ENCODE measurements at regions of chr19 and their contacts with region 1.

Region 1: DNA sequence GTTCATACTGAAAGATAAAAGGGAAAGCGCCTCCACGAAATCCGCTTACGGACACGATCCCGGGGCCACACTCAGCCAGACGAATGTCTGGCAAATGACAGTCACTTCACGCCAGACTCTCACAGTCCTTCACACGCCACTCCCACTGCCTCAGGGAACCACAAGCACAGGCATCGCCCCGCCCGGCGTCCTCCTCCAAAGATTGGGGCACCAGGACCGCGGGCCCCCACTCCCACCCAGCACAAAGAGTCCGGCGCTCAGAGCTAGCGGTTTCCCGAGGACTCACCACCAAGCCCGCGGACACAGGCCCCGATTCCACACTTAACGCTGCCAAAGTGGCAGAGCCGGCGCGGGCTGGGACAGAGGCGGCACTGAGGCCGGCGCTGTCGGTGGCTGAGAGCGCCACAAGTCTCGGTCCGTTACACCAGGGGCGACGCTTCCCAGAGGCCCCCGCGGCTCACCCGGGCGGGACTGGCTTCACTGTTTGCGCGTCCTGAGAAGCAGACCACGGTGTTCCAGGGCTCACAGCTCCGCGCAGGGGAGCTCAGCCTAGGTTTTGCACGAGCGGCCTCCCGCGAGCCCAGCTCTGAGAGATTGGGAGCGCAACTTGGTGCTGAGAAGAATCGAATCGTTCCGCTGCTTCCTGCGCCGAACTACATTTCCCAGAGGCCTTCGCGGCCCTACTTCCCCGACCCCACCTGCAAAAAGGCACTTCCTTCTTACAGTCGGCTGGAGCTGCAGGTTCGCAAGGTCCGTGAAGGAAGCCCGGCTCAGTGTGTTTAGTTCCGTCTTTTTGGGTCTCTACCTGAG is at the start of gene ZNF569:
- DNase-seq: peak; percentile 75 to 81 (median 78)
- H3K4me3 ChIP-seq: peak within 1 kb of the TSS; percentile 45 to 98 (median 64)
- H3K4me3 Mint-ChIP-seq: peak within 1 kb of the TSS; percentile 96 to 98
- H3K27ac ChIP-seq: peak within 1 kb of the TSS; percentile 74 to 86
- H3K27ac Mint-ChIP-seq: peak within 1 kb of the TSS; percentile 67 to 95 (median 90)
- H3K4me1 ChIP-seq: peaks cover 26 to 33% of the 10 kb centered on the region in 2 donors
- H3K4me1 Mint-ChIP-seq: peaks cover 30% of the 10 kb centered on the region
- H3K27me3 ChIP-seq: no peaks in the 10 kb centered on the region
- H3K27me3 Mint-ChIP-seq: no peaks in the 10 kb centered on the region
- CTCF ChIP-seq: no peak
- polyA plus RNA-seq, gene ZNF569: 0.79 to 1.2 (median 0.83) TPM

Region 2: DNA sequence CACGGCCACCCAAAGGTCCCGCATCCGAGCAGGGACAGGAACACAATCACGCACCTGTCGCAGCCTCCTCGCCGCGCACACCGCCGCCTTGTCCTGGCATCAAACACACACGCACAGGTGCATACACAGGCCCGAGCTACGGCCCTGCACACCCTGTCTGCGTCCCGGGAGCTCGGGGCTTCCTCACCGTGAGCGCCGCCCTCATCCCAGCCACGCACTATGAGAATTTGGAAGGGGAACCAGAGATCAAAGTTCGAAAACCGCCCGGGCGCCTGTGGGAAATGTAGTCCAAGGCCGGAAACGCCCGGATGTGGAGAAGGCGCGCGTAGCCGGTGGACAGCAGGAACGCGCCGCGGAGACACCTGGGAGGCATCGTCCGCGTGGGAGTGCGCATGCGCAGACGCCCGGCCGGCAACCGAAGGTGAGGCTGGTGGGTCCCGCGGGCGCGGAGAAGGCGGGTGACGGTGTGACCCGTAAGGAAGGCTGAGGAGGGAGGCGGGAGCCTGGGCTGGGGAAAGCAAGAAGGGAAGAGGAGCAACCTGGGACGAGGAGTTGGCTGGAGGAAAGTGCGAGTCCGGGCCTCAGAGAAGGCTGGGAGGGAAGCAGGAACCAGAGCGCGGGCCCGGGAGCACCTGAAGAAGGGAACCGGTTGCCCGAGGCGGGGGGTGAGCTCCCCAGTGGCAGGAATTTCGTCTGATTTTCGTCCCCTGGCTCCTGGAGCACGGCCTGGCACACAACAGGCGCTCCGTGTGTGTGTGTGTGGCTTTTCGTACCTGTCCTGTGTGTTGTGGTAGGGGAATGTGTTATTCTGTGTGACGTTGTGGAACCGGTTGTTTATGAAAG is 779.6 kb before region 1 on chr19 and contains the start of gene ZNF567:
- intact Hi-C with region 1: loop called in 1 of 2 experiments (anchors 10 kb)
- DNase-seq: peak; percentile 88 to 90 (median 89)
- H3K4me3 ChIP-seq: peak within 1 kb of the TSS; percentile 35 to 92 (median 63)
- H3K4me3 Mint-ChIP-seq: peak within 1 kb of the TSS; percentile 96 to 99
- H3K27ac ChIP-seq: peak within 1 kb of the TSS; percentile 13 to 77
- H3K27ac Mint-ChIP-seq: peak within 1 kb of the TSS; percentile 66 to 90 (median 83)
- H3K4me1 ChIP-seq: peaks cover 15 to 23% of the 10 kb centered on the region in 2 donors
- H3K4me1 Mint-ChIP-seq: peaks cover 24% of the 10 kb centered on the region
- H3K27me3 ChIP-seq: no peaks in the 10 kb centered on the region
- H3K27me3 Mint-ChIP-seq: peaks cover 0 to 1% (median 0%) of the 10 kb centered on the region in 3 donors
- CTCF ChIP-seq: no peak
- polyA plus RNA-seq, gene ZNF567: 0.84 to 1.7 (median 1.5) TPM

Region 3: DNA sequence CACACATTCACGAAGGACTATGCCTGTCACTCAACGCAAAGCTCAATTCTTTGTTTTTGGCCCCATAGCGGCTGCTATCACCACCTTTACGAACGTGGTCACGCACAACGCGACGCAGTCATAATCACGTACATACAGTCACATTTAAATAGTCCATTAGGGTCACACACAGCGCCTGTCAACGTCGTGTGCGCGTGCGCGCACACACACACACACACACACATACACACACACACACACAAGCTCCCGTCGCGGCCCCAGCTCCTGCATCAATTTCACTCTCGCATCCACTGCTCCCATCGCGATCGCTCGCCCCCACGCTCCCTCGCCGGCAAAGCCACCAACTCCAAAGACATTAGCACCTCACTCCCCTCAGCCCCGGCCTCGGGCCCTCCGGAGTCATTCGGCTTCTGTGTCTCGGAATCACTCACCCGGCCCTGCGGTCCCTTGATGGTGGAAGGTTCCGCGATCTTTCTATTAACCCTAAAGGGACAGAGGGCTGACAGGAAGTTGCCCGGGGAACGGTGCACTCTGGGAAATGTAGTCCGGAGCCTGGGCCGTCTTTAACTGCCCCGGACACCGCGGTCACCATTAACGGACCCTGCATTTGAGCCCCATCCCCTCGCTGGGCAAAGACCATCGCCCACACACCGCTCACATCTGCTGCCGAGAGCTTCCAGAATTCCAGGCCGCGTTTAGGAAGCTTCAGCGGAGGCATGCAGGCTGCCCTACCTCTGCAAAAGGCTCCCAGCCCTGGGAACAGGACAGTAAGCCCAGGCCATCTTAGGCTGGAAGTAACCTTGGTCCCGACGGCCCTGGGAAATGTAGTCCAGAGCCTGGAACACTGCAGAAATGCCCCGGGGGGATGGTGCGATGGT is 628.9 kb before region 1 on chr19 and contains the start of gene ZNF790:
- intact Hi-C with region 1: loop called in 1 of 2 experiments (anchors 5 kb)
- DNase-seq: peak; percentile 83 to 86 (median 84)
- H3K4me3 ChIP-seq: peak within 1 kb of the TSS; percentile 61 to 92 (median 64)
- H3K4me3 Mint-ChIP-seq: no peak within 1 kb of the TSS
- H3K27ac ChIP-seq: peak within 1 kb of the TSS; percentile 83 to 86
- H3K27ac Mint-ChIP-seq: no peak within 1 kb of the TSS
- H3K4me1 ChIP-seq: peaks cover 14 to 18% of the 10 kb centered on the region in 2 donors
- H3K4me1 Mint-ChIP-seq: no peaks in the 10 kb centered on the region
- H3K27me3 ChIP-seq: no peaks in the 10 kb centered on the region
- H3K27me3 Mint-ChIP-seq: no peaks in the 10 kb centered on the region
- CTCF ChIP-seq: no peak
- polyA plus RNA-seq, gene ZNF790: 0.35 to 2.7 (median 2.3) TPM

Region 4: GRCh38 chr19:37217855-37218591 is 249.0 kb before region 1 on chr19 and contains the start of gene ZNF383:
- intact Hi-C with region 1: loop called (anchors 5 kb)
- DNase-seq: peak; percentile 70 to 75 (median 72)
- H3K4me3 ChIP-seq: peak within 1 kb of the TSS; percentile 92 to 100 (median 94)
- H3K4me3 Mint-ChIP-seq: peak within 1 kb of the TSS; percentile 99
- H3K27ac ChIP-seq: peak within 1 kb of the TSS; percentile 71 to 92
- H3K27ac Mint-ChIP-seq: peak within 1 kb of the TSS; percentile 92 to 99 (median 94)
- H3K4me1 ChIP-seq: peaks cover 10 to 16% of the 10 kb centered on the region in 2 donors
- H3K4me1 Mint-ChIP-seq: peaks cover 16% of the 10 kb centered on the region
- H3K27me3 ChIP-seq: no peaks in the 10 kb centered on the region
- H3K27me3 Mint-ChIP-seq: peaks cover 0 to 4% (median 2%) of the 10 kb centered on the region in 3 donors
- CTCF ChIP-seq: no peak
- polyA plus RNA-seq, gene ZNF383: 2.8 to 4.2 (median 3.5) TPM

Region 5: DNA sequence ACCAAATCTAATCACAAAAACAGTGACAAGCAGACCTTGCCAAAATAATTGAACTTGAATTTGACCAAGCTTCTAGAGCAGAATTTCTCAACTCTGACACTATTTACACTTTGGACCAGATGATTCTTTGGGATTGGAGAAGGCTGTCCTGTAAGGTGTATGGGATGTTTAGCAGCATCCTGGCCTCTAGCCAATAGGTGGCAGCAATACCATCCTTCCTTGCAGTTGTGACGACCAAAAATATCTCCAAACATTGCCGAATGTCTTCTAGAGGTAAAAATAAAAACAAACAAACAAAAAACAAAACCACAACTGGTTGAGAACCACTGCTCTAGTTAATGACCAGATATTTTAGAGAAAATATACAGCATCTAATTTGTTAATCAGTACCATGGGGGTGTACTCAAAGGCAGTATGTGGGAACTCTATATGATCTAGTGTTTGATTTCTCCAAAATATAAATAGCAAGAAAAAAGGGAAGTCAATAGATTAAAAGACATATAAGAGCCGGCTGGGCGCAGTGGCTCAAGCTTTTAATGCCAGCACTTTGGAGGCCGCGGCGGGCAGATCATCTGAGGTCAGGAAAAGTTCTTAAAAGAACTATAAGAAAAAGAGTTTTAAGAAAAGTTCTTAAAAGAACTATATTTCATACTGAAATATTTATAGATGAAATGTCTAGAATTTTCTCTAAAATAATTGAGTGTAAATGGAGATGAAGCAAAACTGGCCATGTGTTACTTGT is 157.0 kb before region 1 on chr19:
- intact Hi-C with region 1: loop called in 1 of 2 experiments (anchors 10 kb)
- DNase-seq: no peak
- H3K4me3 ChIP-seq: no peak overlapping the region
- H3K4me3 Mint-ChIP-seq: no peak overlapping the region
- H3K27ac ChIP-seq: no peak overlapping the region
- H3K27ac Mint-ChIP-seq: no peak overlapping the region
- H3K4me1 ChIP-seq: peaks cover 9 to 12% of the 10 kb centered on the region in 2 donors
- H3K4me1 Mint-ChIP-seq: peaks cover 15% of the 10 kb centered on the region
- H3K27me3 ChIP-seq: peaks cover 3 to 12% of the 10 kb centered on the region in 2 donors
- H3K27me3 Mint-ChIP-seq: peaks cover 10 to 16% (median 11%) of the 10 kb centered on the region in 3 donors
- CTCF ChIP-seq: no peak

Region 6: DNA sequence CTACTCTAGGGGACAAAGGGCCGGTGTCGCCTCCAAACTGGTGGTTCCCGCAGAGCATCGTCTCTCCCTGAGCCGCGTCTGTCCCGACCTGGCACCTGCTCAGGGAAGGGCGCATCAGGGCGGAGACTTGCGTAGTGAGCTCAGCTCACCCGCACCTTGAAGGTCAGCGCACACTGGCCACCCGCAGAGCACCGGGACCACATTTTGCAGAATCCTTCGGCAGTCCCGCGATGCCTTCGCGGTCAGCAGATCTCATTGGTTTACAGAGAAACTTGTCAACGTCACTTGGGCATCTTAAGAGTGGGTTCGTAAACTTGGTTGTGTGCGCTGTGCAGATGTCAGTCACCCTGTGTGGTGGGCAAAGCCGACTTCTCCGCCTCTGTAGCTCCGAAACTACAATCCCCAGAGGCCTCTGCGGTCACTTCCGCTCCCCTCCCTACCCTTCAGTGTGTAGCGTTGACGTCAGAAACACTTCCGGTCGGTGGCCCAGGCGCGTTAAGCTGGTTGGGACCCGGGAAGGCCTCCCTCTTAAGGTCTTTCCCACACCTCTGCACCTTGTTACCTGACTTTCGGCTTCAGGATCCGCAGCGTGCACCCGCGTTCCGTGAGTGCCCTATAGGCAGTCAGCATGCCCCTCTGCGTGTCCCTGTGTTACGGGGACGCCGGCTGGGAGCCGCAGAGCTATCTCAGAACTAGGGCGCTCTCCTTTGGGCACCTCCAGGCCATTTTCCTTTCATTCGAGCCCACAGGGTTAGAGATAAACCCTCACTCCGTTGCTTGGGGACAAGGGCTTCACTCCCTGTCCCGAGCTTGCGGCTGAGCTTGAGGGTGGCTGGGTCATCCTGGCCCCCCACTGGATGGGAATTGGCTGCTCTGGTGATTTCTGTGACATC is 132.6 kb before region 1 on chr19:
- intact Hi-C with region 1: loop called in 1 of 2 experiments (anchors 1 kb)
- DNase-seq: peak; percentile 79 to 86 (median 79)
- H3K4me3 ChIP-seq: peak overlapping the region; percentile 53 to 92 (median 64)
- H3K4me3 Mint-ChIP-seq: peak overlapping the region; percentile 85 to 90
- H3K27ac ChIP-seq: peak overlapping the region; percentile 29 to 89
- H3K27ac Mint-ChIP-seq: peak overlapping the region; percentile 77 to 91 (median 89)
- H3K4me1 ChIP-seq: peaks cover 8 to 17% of the 10 kb centered on the region in 2 donors
- H3K4me1 Mint-ChIP-seq: peaks cover 16% of the 10 kb centered on the region
- H3K27me3 ChIP-seq: no peaks in the 10 kb centered on the region
- H3K27me3 Mint-ChIP-seq: peaks cover 0 to 3% (median 0%) of the 10 kb centered on the region in 3 donors
- CTCF ChIP-seq: no peak

Region 7: GRCh38 chr19:37370880-37371661 is 95.9 kb before region 1 on chr19 and contains the start of gene ZNF527:
- intact Hi-C with region 1: loop called (anchors 2 to 5 kb)
- DNase-seq: peak; percentile 89 to 93 (median 91)
- H3K4me3 ChIP-seq: peak within 1 kb of the TSS; percentile 62 to 79 (median 72)
- H3K4me3 Mint-ChIP-seq: peak within 1 kb of the TSS; percentile 99 to 100
- H3K27ac ChIP-seq: peak within 1 kb of the TSS; percentile 59 to 73
- H3K27ac Mint-ChIP-seq: peak within 1 kb of the TSS; percentile 95 to 98 (median 96)
- H3K4me1 ChIP-seq: peaks cover 8% of the 10 kb centered on the region in 2 donors
- H3K4me1 Mint-ChIP-seq: peaks cover 9% of the 10 kb centered on the region
- H3K27me3 ChIP-seq: no peaks in the 10 kb centered on the region
- H3K27me3 Mint-ChIP-seq: peaks cover 0 to 2% (median 0%) of the 10 kb centered on the region in 3 donors
- CTCF ChIP-seq: no peak
- polyA plus RNA-seq, gene ZNF527: 0.83 to 1.6 (median 1.3) TPM